Posterior vena cava (tissue), 2 donors: ENCODE measurements at regions of chr1 and their contacts with region 1.

Region 1: DNA sequence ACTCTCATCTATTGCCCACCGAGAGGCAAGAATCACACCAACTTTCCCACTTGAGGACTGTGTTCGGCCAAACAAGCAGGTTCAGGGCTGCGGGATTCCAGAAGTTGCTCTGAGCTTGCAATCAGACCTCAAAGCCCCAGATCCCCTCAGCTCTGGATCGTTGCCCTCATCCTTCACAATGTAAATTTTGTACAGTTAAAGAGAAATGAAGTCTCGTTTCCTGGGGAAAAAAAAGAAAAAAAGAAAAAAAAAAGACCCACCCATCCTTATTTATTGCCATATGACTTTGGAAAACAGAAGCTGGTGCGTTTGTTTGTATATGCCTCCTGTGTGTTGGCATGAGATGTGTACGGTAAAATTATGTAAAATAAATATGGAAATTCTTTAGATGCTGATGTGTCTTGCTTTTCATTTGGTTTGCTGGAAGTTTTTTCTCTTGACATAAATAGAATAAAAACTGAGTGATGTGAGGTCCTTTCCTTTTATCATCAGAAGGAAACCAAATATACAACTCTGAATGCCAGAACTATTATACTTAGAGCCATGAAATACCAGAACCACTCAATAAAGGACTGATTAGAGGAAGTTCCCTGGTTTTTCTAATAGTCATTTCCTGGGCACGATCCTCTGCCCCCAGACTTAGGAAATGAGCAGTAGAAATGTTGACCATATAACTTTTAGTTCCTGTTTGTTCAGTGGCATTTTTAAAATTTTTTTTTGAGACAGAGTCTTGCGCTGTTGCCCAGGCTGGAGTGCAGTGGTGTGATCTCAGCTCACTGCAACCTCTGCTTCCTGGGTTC is 48.7 kb downstream of the LHX4 start:
- DNase-seq: peak; percentile 37

Region 2: GRCh38 chr1:180973369-180973768 is 694.6 kb after region 1 on chr1:
- intact Hi-C with region 1: loop called in 1 of 2 experiments (anchors 5 kb)
- DNase-seq: no peak